MCF 10A (cell line): ENCODE measurements at regions of chr15 and their contacts with region 1.

Region 1: DNA sequence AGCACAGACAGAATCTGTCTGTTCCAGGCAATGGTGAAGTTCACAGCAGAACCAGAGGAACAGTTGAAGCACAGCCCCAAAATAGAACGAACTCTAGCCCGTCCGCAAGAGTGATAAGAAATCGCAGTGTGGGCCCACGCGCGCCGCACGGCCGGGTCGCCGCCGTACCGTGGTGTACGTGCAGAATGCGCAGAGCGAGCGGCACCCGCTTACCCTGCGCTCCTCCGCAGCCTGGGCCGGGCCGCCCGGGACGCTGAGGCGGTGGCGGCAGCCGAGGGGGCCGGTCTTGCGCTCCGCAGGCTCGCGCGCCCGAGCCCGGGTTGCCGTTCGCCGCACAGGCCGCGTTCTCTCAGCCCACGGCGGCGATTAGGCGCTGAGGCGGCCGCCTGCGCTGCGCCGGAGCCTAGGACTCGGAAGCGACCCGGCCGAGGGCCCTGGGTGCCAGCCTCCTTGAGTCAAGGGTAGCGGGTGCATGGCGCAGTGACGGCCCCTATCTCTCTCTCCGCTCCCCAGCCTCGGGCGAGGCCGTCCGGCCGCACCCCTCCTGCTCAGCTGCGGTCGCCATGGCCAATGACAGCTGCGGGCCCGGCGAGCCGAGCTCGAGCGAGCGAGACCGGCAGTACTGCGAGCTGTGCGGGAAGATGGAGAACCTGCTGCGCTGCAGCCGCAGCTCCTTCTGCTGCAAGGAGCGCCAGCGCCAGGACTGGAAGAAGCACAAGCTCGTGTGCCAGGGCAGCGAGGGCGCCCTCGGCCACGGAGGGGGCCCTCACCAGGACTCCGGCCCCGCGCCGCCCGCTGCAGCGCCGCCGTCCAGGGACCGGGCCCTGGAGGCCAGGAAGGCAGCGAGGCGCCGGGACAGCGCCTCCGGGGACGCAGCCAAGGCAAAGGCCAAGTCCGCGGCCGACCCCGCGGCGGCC is 20.5 kb downstream of the WDR73 start:
- DNase-seq: peak; percentile 76
- H3K4me3 Mint-ChIP-seq: peak overlapping the region; percentile 91
- H3K27ac Mint-ChIP-seq: peak overlapping the region; percentile 71
- H3K4me1 Mint-ChIP-seq: peaks cover 23% of the 10 kb centered on the region
- H3K27me3 Mint-ChIP-seq: no peaks in the 10 kb centered on the region
- CTCF ChIP-seq: no peak

Region 2: GRCh38 chr15:84552896-84553295 is 80.7 kb before region 1 on chr15:
- CTCF ChIA-PET with region 1: no interaction called
- POLR2A ChIA-PET with region 1: no interaction called
- intact Hi-C with region 1: no loop called
- DNase-seq: no peak
- H3K4me3 Mint-ChIP-seq: no peak overlapping the region
- H3K27ac Mint-ChIP-seq: no peak overlapping the region
- H3K4me1 Mint-ChIP-seq: no peaks in the 10 kb centered on the region
- H3K27me3 Mint-ChIP-seq: no peaks in the 10 kb centered on the region
- CTCF ChIP-seq: no peak

Region 3: DNA sequence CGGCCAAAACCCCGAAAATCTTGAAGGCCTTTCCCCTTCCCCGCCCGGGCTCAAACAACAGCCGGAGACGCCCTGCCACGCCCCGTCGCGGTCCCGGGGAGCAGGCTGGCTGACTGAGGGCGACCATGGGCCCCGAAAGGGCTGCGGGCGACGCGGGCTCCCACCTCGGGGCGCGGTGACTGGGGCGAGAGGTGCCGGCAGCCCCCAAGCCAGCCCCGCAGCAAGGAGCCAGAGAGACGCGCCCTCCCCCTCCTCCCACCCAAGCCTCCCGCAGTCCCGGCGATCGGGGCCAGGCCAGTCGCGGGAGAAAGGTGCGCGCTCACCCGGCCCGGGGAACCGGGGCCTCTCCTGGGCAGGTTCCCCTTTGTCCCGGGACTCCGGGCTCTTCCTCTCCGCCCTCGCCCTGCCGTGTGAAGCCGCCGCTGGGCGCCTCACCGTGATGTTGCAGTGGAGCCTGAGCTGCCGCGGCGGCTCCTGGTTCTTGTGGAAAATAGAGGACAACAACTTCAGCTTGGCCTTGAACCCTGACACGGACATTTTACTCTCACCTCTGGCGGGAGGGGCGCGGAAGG is 63.3 kb before region 1 on chr15:
- CTCF ChIA-PET with region 1: interaction called, 5 read pairs
- POLR2A ChIA-PET with region 1: interaction called, 10 read pairs
- intact Hi-C with region 1: no loop called
- DNase-seq: peak; percentile 50
- H3K4me3 Mint-ChIP-seq: peak overlapping the region; percentile 76
- H3K27ac Mint-ChIP-seq: peak overlapping the region; percentile 76
- H3K4me1 Mint-ChIP-seq: peaks cover 5% of the 10 kb centered on the region
- H3K27me3 Mint-ChIP-seq: no peaks in the 10 kb centered on the region
- CTCF ChIP-seq: no peak

Region 4: GRCh38 chr15:84600851-84601838 is 32.4 kb before region 1 on chr15 and contains the start of gene ZSCAN2:
- CTCF ChIA-PET with region 1: interaction called, 8 read pairs
- POLR2A ChIA-PET with region 1: interaction called, 50 read pairs
- intact Hi-C with region 1: loop called (anchors 1 kb)
- DNase-seq: peak; percentile 95
- H3K4me3 Mint-ChIP-seq: peak within 1 kb of the TSS; percentile 97
- H3K27ac Mint-ChIP-seq: peak within 1 kb of the TSS; percentile 74
- H3K4me1 Mint-ChIP-seq: no peaks in the 10 kb centered on the region
- H3K27me3 Mint-ChIP-seq: no peaks in the 10 kb centered on the region
- CTCF ChIP-seq: no peak
- total RNA-seq, gene ZSCAN2: 4.2 and 4.3 TPM in 2 replicates

Region 5: GRCh38 chr15:84621358-84621979 is 12.1 kb before region 1 on chr15:
- CTCF ChIA-PET with region 1: interaction called, 4 read pairs
- POLR2A ChIA-PET with region 1: interaction called, 25 read pairs
- intact Hi-C with region 1: no loop called
- DNase-seq: no peak
- H3K4me3 Mint-ChIP-seq: no peak overlapping the region
- H3K27ac Mint-ChIP-seq: no peak overlapping the region
- H3K4me1 Mint-ChIP-seq: no peaks in the 10 kb centered on the region
- H3K27me3 Mint-ChIP-seq: no peaks in the 10 kb centered on the region
- CTCF ChIP-seq: no peak

Region 6: DNA sequence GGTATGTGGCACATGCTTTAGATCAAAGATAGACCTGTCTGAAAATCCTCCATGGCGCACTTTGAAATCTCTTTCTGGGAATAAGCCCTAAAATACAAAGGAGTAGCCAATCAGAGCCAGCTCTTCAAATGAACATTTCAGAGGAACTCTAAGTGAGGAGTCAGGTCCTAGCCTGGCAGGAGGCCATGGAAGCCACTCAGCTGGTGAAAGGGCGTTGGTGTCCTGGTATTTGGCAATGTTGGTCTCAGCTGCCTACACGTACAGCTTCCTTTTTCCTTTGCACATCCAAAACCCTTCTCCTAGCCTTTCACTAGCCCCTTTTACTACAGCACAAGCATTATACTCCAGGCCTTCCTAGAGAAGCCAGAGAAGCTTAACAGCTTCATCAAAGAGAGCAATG is 15.0 kb after region 1 on chr15:
- CTCF ChIA-PET with region 1: interaction called, 7 read pairs
- POLR2A ChIA-PET with region 1: interaction called, 30 read pairs
- intact Hi-C with region 1: no loop called
- DNase-seq: peak; percentile 49
- H3K4me3 Mint-ChIP-seq: no peak overlapping the region
- H3K27ac Mint-ChIP-seq: no peak overlapping the region
- H3K4me1 Mint-ChIP-seq: peaks cover 21% of the 10 kb centered on the region
- H3K27me3 Mint-ChIP-seq: no peaks in the 10 kb centered on the region
- CTCF ChIP-seq: no peak

Region 7: DNA sequence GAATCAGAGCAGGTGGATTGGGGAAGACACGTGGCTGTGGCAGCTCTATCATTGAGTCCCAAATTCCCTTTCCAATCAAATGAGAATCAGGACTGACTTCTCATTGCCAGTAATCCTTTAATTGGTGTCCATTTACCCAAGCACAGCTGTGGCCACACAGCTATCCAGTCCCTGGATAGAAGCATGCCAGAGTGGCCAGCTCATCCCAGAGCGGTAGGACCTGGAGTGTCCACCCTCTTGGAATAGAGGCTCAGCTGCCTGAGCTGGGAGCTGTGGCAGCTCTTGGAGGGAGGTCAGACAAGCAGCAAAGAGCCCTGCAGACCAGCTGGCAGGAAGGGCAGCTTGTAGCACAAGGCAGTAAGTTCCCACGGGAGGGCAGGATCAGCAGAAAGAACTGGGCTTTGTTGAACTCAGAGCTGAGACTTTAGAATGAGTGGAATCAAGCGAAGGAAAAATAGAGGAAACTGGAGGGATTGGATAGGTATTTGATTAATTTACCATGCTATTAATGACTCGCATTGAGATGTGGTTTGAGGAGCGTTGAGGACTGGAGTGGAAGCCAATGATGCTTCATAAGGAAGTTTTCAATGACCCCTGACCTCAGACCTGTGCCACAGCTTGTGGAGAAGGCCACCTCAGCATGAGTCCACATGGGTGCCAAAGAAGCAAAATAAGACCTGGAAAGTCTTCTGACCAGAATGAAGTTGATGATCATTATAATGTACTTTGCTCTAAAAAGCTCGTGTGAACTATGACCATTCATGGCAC is 176.7 kb after region 1 on chr15:
- CTCF ChIA-PET with region 1: no interaction called
- POLR2A ChIA-PET with region 1: no interaction called
- intact Hi-C with region 1: no loop called
- DNase-seq: no peak
- H3K4me3 Mint-ChIP-seq: no peak overlapping the region
- H3K27ac Mint-ChIP-seq: peak overlapping the region; percentile 24
- H3K4me1 Mint-ChIP-seq: no peaks in the 10 kb centered on the region
- H3K27me3 Mint-ChIP-seq: no peaks in the 10 kb centered on the region
- CTCF ChIP-seq: no peak